ENCODE measurements at regions of chr12 and their contacts with region 1.

Region 1: DNA sequence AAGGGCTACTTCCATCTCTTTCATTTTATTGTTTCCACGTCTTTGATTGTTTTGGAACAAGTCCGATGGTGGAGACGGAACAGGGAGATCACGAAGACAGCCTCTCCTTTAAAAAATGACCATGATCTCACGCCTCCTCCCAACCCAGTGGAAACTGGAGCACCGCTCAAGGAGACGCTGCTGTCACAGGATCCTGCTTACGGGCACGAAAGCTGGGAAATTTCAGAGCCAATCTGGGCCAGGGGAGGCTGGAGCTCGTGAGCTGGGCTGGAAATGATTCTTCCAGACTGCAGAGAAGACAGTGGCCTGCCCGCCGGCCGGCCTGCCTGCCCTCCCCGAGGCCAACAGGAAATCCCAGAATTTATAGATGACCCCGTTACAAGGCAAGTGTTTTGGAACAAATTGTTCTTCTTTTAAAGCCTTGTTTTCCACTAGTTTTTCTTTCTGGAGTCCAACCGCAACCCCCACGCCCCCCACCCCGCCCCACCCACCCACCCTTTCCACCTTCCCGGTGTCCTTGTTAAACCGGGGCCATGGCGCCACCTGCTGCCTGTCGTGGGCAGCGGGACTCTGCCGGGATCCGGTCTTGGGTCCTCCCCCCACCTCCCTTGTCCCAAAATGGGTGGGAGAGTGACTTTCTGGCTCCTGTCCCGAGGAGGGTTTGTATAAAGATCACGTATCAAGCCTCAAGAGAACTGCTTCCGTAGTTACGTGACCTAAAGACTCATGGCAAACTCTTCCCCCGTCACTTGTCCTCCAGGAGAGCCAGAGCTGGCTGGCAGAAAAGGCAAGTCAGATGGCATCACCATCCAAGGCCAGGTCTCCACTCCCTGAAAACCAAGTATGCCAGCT is 40.3 kb downstream of the MAP1LC3B2 start:
- DNase-seq: peak; percentile 94
- H3K4me3 ChIP-seq: peak overlapping the region in 3 of 4 donors; percentile 26 to 40 (median 35)
- H3K27ac ChIP-seq: peak overlapping the region; percentile 75 to 86 (median 81)
- H3K4me1 ChIP-seq: peaks cover 0 to 37% (median 22%) of the 10 kb centered on the region in 4 donors
- H3K27me3 ChIP-seq: no peaks in the 10 kb centered on the region
- CTCF ChIP-seq: peak; percentile 11 to 81 (median 18)
- EP300 ChIP-seq: peak in 2 of 4 donors; percentile 74 to 79
- POLR2A ChIP-seq: no peak

Region 2: GRCh38 chr12:115998119-115998633 is 601.3 kb before region 1 on chr12:
- intact Hi-C with region 1: loop called (anchors 5 kb)
- DNase-seq: no peak
- H3K4me3 ChIP-seq: no peak overlapping the region
- H3K27ac ChIP-seq: peak overlapping the region in 3 of 4 donors; percentile 49 to 59 (median 59)
- H3K4me1 ChIP-seq: peaks cover 0 to 23% (median 16%) of the 10 kb centered on the region in 4 donors
- H3K27me3 ChIP-seq: no peaks in the 10 kb centered on the region
- CTCF ChIP-seq: peak; percentile 52 to 88 (median 70)
- EP300 ChIP-seq: no peak
- POLR2A ChIP-seq: no peak

Region 3: DNA sequence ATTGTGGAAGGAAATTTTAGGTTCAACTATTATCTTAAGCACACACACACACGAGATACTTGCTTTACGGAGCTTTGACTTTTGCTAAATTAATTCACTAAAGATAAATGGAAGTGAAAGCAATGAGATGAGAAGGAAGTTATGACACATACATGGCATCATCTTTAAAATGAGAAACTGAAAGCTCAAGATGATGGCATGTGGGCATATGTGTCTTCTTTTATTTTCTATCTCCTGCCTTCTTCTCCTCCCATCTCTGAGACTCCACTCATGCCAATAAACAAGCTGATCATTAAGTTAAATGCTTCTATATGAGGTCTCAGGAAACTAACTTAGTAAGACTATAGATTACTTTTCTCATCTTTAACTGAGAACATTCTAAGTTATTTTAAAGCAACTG is 538.7 kb before region 1 on chr12:
- intact Hi-C with region 1: loop called (anchors 5 kb)
- DNase-seq: no peak
- H3K4me3 ChIP-seq: no peak overlapping the region
- H3K27ac ChIP-seq: no peak overlapping the region
- H3K4me1 ChIP-seq: peaks cover 0 to 58% (median 39%) of the 10 kb centered on the region in 4 donors
- H3K27me3 ChIP-seq: no peaks in the 10 kb centered on the region
- CTCF ChIP-seq: no peak
- EP300 ChIP-seq: no peak
- POLR2A ChIP-seq: no peak

Region 4: GRCh38 chr12:116319898-116320621 is 279.5 kb before region 1 on chr12:
- intact Hi-C with region 1: loop called (anchors 2 kb)
- DNase-seq: peak; percentile 96
- H3K4me3 ChIP-seq: peak overlapping the region in 2 of 4 donors; percentile 13 to 15
- H3K27ac ChIP-seq: peak overlapping the region; percentile 82 to 90 (median 88)
- H3K4me1 ChIP-seq: peaks cover 3 to 33% (median 30%) of the 10 kb centered on the region in 4 donors
- H3K27me3 ChIP-seq: no peaks in the 10 kb centered on the region
- CTCF ChIP-seq: no peak
- EP300 ChIP-seq: peak; percentile 86 to 97 (median 94)
- POLR2A ChIP-seq: no peak

Region 5: GRCh38 chr12:116533343-116534251 is 65.9 kb before region 1 on chr12:
- intact Hi-C with region 1: loop called (anchors 5 kb)
- DNase-seq: peak; percentile 93
- H3K4me3 ChIP-seq: peak overlapping the region; percentile 42 to 61 (median 52)
- H3K27ac ChIP-seq: peak overlapping the region; percentile 83 to 89 (median 84)
- H3K4me1 ChIP-seq: peaks cover 0 to 30% (median 28%) of the 10 kb centered on the region in 4 donors
- H3K27me3 ChIP-seq: no peaks in the 10 kb centered on the region
- CTCF ChIP-seq: no peak
- EP300 ChIP-seq: peak in 1 of 4 donors; percentile 22
- POLR2A ChIP-seq: no peak

Region 6: DNA sequence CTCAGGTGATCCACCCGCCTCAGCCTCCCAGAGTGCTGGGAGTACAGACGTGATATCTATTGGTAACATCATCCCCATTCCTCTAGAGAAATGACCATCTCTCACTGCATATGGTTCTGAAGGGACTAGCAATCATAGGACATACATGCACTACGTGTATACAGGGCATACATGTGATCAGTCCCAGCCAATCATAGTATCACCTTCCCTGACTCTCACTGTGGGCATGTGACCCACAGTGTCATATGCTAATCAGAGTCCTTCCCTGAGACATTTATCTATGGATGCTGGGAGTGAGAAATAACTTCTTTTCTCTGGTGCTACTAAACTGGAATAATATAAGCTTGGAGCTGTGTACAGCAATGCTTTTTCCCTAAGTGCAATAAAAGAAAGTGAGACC is 299.2 kb after region 1 on chr12:
- intact Hi-C with region 1: no loop called
- DNase-seq: no peak
- H3K4me3 ChIP-seq: no peak overlapping the region
- H3K27ac ChIP-seq: no peak overlapping the region
- H3K4me1 ChIP-seq: no peaks in the 10 kb centered on the region
- H3K27me3 ChIP-seq: peaks cover 0 to 32% (median 0%) of the 10 kb centered on the region in 3 donors
- CTCF ChIP-seq: no peak
- EP300 ChIP-seq: no peak
- POLR2A ChIP-seq: no peak

Measured in sigmoid colon (tissue), 7 donors.